ENCODE measurements at regions of chr13 and their contacts with region 1.

Region 1: GRCh38 chr13:78020861-78021260 is 102.2 kb upstream of the EDNRB start:
- DNase-seq: no peak
- H3K4me3 ChIP-seq: no peak overlapping the region
- H3K27ac ChIP-seq: no peak overlapping the region
- H3K27me3 ChIP-seq: no peaks in the 10 kb centered on the region
- CTCF ChIP-seq: no peak

Region 2: GRCh38 chr13:77065461-77066147 is 955.3 kb before region 1 on chr13:
- CTCF ChIA-PET with region 1: interaction called, 11 read pairs
- POLR2A ChIA-PET with region 1: no interaction called
- DNase-seq: no peak
- H3K4me3 ChIP-seq: no peak overlapping the region
- H3K27ac ChIP-seq: no peak overlapping the region
- H3K27me3 ChIP-seq: no peaks in the 10 kb centered on the region
- CTCF ChIP-seq: no peak

Region 3: DNA sequence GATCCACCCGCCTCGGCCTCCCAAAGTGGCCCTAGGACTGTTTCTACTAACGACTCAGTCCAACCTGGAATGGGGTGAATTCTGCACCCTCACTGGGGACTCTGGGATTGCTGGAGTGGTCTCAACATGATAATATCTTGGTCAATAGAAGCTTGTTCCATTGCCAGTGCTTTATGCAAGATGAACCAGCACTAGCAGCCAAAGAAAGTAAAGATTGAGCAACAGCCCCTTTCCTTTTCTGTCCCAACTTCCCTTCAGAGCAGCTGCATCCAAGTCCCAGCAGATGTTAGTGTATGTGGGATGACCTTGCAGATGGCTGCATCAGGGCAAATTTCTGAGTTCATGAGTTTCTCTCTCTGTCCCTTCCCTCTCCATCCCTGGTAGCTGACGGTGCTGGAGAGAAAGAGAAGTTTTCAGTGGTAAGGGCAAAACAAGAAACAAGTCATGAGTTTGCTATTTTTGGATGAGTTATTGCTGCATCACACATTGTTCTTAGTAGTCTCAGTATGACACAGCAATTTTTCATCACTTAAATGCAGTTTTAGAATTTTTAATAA is 81.3 kb after region 1 on chr13:
- CTCF ChIA-PET with region 1: no interaction called
- POLR2A ChIA-PET with region 1: no interaction called
- DNase-seq: no peak
- H3K4me3 ChIP-seq: no peak overlapping the region
- H3K27ac ChIP-seq: no peak overlapping the region
- H3K27me3 ChIP-seq: no peaks in the 10 kb centered on the region
- CTCF ChIP-seq: no peak